ENCODE measurements at regions of chr18 and their contacts with region 1.

Region 1: DNA sequence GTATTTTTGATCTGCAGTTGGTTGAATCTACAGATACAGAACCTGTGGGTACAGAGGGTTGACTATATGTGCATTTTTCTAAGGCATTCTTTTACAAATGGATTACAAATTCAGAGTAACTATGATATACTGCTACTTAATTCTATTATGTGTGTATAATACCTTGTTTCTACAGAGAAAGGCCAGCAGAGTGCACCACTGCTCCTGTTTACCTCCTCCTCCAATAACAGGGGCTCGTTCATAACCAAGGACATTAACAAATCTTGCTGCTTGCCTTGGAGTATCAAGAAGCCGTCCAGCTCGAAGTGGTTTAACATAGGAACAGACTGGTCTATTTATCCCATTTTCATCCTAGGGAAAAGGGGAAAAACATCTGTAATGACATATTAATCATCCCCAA is 16.4 kb downstream of the CEP76 start:
- DNase-seq: no peak
- H3K4me3 ChIP-seq: no peak overlapping the region
- H3K27ac ChIP-seq: no peak overlapping the region
- H3K4me1 ChIP-seq: no peaks in the 10 kb centered on the region
- H3K27me3 ChIP-seq: no peaks in the 10 kb centered on the region
- CTCF ChIP-seq: no peak
- EP300 ChIP-seq: no peak
- POLR2A ChIP-seq: no peak
- RAD21 ChIP-seq: peak in 1 of 2 experiments; percentile 16; a peak in 1 of 4 replicates

Region 2: DNA sequence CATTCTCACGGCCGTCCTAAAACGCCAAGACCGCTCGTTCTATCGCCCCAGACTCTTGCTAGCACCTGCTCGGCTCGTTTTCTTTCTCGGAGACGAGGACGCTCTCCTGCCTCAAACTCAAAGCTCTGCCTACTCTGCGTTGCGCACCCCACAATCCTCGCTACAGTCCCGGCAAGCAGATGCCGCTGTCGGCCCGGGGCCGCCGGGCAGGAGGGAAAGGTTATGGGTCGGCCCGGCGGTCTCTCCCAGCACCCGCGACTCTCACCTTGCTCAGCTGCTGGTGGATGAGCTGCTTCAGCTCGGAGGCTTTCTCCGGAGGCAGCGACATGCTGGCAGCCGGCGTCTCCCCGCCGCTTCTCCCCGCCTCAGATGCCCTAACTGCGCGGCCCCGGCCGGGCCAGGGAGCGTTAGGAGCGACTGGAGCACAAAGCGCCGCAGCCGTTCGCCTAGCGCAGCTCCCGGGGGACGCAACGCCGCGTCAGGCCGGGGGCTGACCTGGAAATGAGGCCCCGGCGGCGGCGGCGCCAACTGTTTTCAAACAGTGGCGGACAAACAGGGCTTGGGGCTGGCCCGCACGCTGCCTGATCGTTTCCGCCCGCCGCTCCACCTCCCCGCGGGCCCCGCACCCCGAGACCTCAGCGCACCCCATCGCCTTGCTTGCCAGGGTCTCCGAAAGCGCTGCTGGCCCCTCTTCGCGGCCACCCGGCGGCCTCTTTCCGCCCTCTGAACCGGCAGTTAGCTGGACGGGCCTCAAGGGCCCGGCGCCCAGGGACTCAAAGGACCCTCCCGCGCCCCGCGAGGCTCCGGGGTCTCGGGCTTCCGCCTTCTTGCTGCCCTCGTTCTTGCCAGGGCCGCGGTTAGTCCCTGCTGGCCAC is 16.4 kb after region 1 on chr18 and contains the starts of genes CEP76 and PSMG2:
- CTCF ChIA-PET with region 1: interaction called, 3 read pairs
- POLR2A ChIA-PET with region 1: interaction called, 25 read pairs
- DNase-seq: peak; percentile 65 to 90
- H3K4me3 ChIP-seq: peak within 1 kb of the TSS; percentile 95 to 97 (median 95)
- H3K27ac ChIP-seq: peak within 1 kb of the TSS; percentile 98
- H3K4me1 ChIP-seq: peaks cover 0 to 10% (median 2%) of the 10 kb centered on the region in 4 experiments; a peak in 3 of 7 replicates
- H3K27me3 ChIP-seq: no peaks in the 10 kb centered on the region
- CTCF ChIP-seq: peak in 1 of 3 experiments; percentile 6; a peak in 1 of 4 replicates
- EP300 ChIP-seq: no peak
- POLR2A ChIP-seq: peak; percentile 28 to 95
- RAD21 ChIP-seq: no peak
- total RNA-seq, gene CEP76: 14.3 and 18.1 TPM in 2 replicates
- total RNA-seq, gene PSMG2: 76.5 and 79.3 TPM in 2 replicates